ENCODE measurements at regions of chr17 and their contacts with region 1.

Region 1: DNA sequence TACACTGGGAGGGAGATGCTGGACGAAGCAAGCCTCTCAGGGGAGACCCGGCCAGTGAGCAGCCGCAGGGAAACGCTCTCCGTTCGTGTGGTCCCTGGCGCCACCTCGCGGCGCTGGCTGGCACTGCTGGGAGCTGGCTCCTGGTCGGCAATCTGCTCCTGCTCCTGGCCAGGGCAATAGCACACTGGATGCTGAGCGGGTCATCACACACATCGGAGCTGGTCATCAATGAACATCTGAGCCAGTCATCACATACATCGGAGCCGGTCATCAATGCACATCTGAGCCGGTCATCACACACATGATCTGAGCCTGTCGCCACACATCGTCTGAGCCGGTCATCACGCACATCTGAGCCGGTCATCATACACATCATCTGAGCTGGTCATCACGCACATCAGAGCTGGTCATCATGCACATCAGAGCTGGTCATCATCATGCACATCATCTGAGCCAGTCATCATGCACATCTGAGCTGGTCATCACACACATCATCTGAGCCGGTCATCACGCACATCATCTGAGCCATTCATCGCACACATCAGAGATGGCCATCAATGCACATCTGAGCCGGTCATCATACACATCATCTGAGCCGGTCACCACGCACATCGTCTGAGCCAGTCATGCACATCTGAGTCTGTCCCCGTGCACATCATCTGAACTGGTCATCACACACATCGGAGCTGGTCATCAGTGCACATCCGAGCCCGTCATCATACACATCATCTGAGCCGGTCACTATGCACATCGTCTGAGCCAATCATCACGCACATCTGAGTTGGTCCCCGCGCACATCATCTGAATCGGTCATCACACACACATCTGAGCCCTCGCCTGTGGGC is 217.3 kb downstream of the RBFOX3 start:
- DNase-seq: peak; percentile 74 to 87 (median 77)
- ATAC-seq: peak; percentile 57 to 88 (median 81)
- H3K4me3 ChIP-seq: no peak overlapping the region
- H3K27ac ChIP-seq: no peak overlapping the region
- H3K4me1 ChIP-seq: no peaks in the 10 kb centered on the region
- H3K27me3 ChIP-seq: peaks cover 17 to 97% (median 67%) of the 10 kb centered on the region in 9 donors
- CTCF ChIP-seq: peak; percentile 81 to 94 (median 88)
- POLR2A ChIP-seq: no peak

Region 2: GRCh38 chr17:78998311-78999055 is 395.1 kb before region 1 on chr17:
- intact Hi-C with region 1: loop called in 1 of 10 experiments (anchors 5 kb)
- DNase-seq: peak; percentile 63 to 86 (median 83)
- ATAC-seq: peak; percentile 72 to 78 (median 76)
- H3K4me3 ChIP-seq: no peak overlapping the region
- H3K27ac ChIP-seq: peak overlapping the region in 11 of 12 donors; percentile 41 to 70 (median 53)
- H3K4me1 ChIP-seq: peaks cover 0 to 43% (median 19%) of the 10 kb centered on the region in 12 donors
- H3K27me3 ChIP-seq: no peaks in the 10 kb centered on the region
- CTCF ChIP-seq: peak in 5 of 12 donors; percentile 6 to 23 (median 18)
- POLR2A ChIP-seq: no peak

Region 3: DNA sequence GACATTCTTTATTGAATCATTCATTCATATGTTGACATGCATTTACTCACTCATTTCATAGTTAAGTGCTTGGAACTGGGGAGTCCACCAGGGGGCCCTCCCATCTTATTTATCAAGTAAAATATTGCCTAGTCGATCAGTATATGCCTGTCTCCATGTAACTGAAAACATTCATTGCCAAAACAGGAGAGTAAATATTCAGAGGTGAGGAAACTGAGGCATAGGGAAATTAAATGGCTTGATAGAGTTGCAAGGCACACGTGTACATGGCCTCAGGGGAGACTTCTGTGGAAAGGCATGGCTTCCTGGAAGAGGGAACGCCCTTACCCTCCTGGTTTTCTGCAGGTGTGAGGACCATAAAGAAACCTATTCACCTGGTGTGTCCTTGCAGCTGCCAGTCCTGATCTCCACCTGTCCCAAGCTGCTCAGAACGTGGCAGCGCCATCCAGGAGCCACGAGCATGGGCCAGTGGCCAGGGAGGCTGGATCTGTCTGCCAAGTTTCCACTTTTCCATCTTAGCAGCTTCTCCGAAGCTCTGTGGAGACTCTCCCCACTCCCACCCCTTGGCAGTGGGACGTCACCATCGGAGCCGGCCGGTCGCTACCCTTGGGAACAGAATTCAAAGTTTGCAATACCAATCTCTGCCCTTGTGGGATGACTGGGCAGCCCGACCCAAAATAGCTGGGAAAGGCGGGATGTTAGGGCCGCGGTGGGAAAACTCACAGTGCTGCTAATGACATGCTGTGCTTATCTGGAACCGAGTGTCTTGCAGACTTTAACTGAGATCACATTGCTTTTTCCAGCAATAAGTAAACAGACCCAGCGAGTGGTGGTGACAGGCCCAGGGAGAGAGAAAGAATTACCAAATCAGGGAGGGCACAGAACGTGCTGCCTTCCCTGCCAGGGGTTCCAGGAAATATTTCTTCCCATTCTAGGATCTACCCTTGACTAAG is 373.7 kb before region 1 on chr17:
- intact Hi-C with region 1: loop called in 7 of 10 experiments (anchors 2 to 10 kb)
- DNase-seq: peak; percentile 58 to 86 (median 74)
- ATAC-seq: peak; percentile 29 to 44 (median 36)
- H3K4me3 ChIP-seq: peak overlapping the region in 2 of 12 donors; percentile 1 to 10
- H3K27ac ChIP-seq: peak overlapping the region; percentile 21 to 98 (median 80)
- H3K4me1 ChIP-seq: peaks cover 0 to 54% (median 46%) of the 10 kb centered on the region in 12 donors
- H3K27me3 ChIP-seq: peaks cover 0 to 28% (median 0%) of the 10 kb centered on the region in 9 donors
- CTCF ChIP-seq: peak; percentile 57 to 82 (median 75)
- POLR2A ChIP-seq: no peak

Region 4: DNA sequence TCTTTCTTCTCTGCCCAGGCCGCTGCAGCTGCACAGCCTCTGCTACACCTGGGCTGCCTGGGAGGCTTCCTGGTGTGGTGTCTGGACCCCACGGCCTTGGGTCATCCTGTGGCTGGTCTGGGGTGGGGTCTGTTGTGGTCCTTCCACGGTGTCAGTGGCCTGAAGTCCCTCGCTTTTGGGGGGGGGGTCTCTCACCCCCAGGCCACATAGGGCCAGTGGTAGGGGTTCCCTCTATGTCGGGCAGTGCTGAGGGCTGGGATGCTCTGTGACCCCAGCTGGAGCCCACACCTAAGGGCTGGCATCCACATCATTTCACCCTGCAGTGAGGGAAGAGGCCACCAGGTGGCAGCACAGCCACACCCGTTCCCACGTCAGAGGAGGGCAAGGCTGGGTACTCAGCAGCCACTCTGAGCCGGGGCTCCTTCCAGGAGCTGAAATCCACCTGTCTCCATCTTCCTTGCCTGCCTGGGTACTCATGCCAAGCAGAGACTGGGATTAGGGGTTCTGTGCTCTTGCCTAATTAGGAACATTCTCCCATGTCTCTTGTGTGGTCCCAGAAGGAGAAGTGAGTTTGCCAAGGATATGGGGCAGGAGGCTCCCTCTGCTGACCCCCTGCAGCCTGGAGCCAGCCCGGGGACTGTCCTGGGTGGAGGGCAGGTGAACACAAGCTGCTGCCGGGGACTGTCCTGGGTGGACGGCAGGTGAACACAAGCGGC is 306.0 kb before region 1 on chr17:
- intact Hi-C with region 1: loop called (anchors 1 to 5 kb)
- DNase-seq: peak; percentile 56 to 83 (median 64)
- ATAC-seq: peak; percentile 49 to 73 (median 64)
- H3K4me3 ChIP-seq: no peak overlapping the region
- H3K27ac ChIP-seq: no peak overlapping the region
- H3K4me1 ChIP-seq: peaks cover 0 to 18% (median 5%) of the 10 kb centered on the region in 12 donors
- H3K27me3 ChIP-seq: peaks cover 0 to 18% (median 0%) of the 10 kb centered on the region in 9 donors
- CTCF ChIP-seq: peak; percentile 77 to 97 (median 92)
- POLR2A ChIP-seq: no peak

Region 5: GRCh38 chr17:79276821-79277220 is 116.8 kb before region 1 on chr17:
- intact Hi-C with region 1: no loop called
- DNase-seq: no peak
- ATAC-seq: no peak
- H3K4me3 ChIP-seq: no peak overlapping the region
- H3K27ac ChIP-seq: no peak overlapping the region
- H3K4me1 ChIP-seq: no peaks in the 10 kb centered on the region
- H3K27me3 ChIP-seq: peaks cover 4 to 59% (median 14%) of the 10 kb centered on the region in 9 donors
- CTCF ChIP-seq: no peak
- POLR2A ChIP-seq: no peak

Region 6: DNA sequence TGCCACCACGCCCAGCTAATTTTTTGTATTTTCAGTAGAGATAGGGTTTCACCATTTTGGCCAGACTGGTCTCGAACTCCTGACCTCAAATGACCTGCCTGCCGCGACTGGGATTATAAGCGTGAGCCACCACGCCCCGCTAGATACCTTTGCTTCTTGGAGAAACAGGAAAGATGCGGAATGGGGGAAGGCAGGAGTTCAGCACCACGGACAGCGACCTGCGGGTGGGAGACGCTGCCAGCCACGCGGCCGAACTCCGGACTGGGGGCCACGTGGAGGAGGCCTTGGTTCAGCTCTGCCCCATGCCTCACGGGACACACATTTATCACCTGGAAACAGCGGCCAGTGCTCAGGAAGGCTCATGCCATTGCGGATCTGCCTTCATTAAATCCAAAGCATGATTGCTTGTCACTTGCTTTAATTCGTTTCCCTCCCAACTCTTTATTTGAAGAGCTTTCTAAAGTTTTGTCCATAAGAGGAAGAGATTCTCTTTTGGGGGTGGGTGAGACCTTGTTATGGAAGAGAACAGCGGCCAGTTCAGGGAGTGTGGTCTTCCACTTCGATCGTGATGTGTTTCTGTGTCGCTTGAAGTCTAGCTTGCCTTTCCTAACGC is 99.0 kb before region 1 on chr17:
- intact Hi-C with region 1: no loop called
- DNase-seq: peak; percentile 54 to 77 (median 61)
- ATAC-seq: peak in 3 of 4 donors; percentile 46 to 66 (median 51)
- H3K4me3 ChIP-seq: no peak overlapping the region
- H3K27ac ChIP-seq: no peak overlapping the region
- H3K4me1 ChIP-seq: no peaks in the 10 kb centered on the region
- H3K27me3 ChIP-seq: peaks cover 0 to 46% (median 5%) of the 10 kb centered on the region in 9 donors
- CTCF ChIP-seq: no peak
- POLR2A ChIP-seq: no peak

Region 7: GRCh38 chr17:79707931-79708891 is 314.6 kb after region 1 on chr17:
- intact Hi-C with region 1: loop called in 1 of 10 experiments (anchors 5 kb)
- DNase-seq: peak in 3 of 5 donors; percentile 28 to 56 (median 51)
- ATAC-seq: peak in 3 of 4 donors; percentile 27 to 59 (median 35)
- H3K4me3 ChIP-seq: peak overlapping the region in 3 of 12 donors; percentile 3 to 25 (median 16)
- H3K27ac ChIP-seq: no peak overlapping the region
- H3K4me1 ChIP-seq: peaks cover 0 to 4% (median 3%) of the 10 kb centered on the region in 12 donors
- H3K27me3 ChIP-seq: peaks cover 0 to 47% (median 3%) of the 10 kb centered on the region in 9 donors
- CTCF ChIP-seq: peak; percentile 72 to 84 (median 80)
- POLR2A ChIP-seq: no peak

Measured in heart left ventricle (tissue), 16 donors.